PC-3 (cell line): ENCODE measurements at regions of chr6 and their contacts with region 1.

Region 1: GRCh38 chr6:151675746-151676416 is 131.6 kb upstream of the ESR1 start:
- DNase-seq: peak; percentile 67
- ATAC-seq: peak; percentile 58; the same call in 1 of the 2 replicates
- H3K4me3 ChIP-seq: 0 out of 2 replicates have a peak overlapping the region, but pooled peaks have one; percentile 26
- H3K27ac ChIP-seq: no peak overlapping the region
- H3K4me1 ChIP-seq: peaks cover 7% of the 10 kb centered on the region; the same call in 1 of the 2 replicates
- H3K27me3 ChIP-seq: no peaks in the 10 kb centered on the region
- CTCF ChIP-seq: peak; percentile 91

Region 2: GRCh38 chr6:151506761-151507160 is 169.1 kb before region 1 on chr6:
- CTCF ChIA-PET with region 1: no interaction called
- POLR2A ChIA-PET with region 1: no interaction called
- intact Hi-C with region 1: no loop called
- DNase-seq: no peak
- ATAC-seq: no peak
- H3K4me3 ChIP-seq: no peak overlapping the region
- H3K27ac ChIP-seq: no peak overlapping the region
- H3K4me1 ChIP-seq: peaks cover 6% of the 10 kb centered on the region; the same call in 1 of the 2 replicates
- H3K27me3 ChIP-seq: no peaks in the 10 kb centered on the region
- CTCF ChIP-seq: no peak

Region 3: GRCh38 chr6:152124429-152125074 is 448.7 kb after region 1 on chr6:
- CTCF ChIA-PET with region 1: no interaction called
- POLR2A ChIA-PET with region 1: no interaction called
- intact Hi-C with region 1: loop called (anchors 5 kb)
- DNase-seq: peak; percentile 78
- ATAC-seq: no peak
- H3K4me3 ChIP-seq: no peak overlapping the region
- H3K27ac ChIP-seq: no peak overlapping the region
- H3K4me1 ChIP-seq: peaks cover 10% of the 10 kb centered on the region
- H3K27me3 ChIP-seq: no peaks in the 10 kb centered on the region
- CTCF ChIP-seq: peak; percentile 83

Region 4: DNA sequence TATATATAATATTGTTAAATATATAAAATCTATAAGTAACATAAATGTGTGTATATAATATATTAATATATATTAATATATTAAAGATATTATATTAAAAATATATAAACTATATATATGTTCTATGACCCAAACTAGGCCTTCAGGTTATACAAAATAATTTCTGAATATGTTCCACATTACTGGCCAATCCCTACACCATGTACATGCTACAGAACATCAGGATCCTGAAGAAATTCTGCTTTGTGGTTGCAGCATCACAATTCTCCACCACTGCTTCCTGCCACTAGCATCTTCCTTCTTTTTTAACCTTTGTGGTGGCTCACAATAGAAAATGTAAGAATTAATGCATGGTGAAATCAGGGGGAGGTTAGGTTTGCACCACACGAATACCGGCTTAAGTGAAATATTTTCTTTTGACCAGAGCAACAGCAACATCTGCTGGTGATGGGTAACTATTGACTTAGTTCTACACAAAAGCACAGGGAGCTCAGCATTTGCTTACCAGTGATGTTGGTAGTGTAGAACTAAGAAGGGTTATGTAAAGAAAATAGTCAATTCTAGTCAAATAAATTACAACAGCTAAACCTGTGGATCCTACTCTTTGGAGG is 680.7 kb after region 1 on chr6:
- CTCF ChIA-PET with region 1: no interaction called
- POLR2A ChIA-PET with region 1: no interaction called
- intact Hi-C with region 1: loop called (anchors 5 kb)
- DNase-seq: peak; percentile 62
- ATAC-seq: peak; percentile 67
- H3K4me3 ChIP-seq: no peak overlapping the region
- H3K27ac ChIP-seq: no peak overlapping the region
- H3K4me1 ChIP-seq: 0 out of 2 replicates have a peak, but pooled peaks cover 10% of the 10 kb centered on the region
- H3K27me3 ChIP-seq: no peaks in the 10 kb centered on the region
- CTCF ChIP-seq: peak; percentile 67